ENCODE measurements at regions of chr1 and their contacts with region 1.

Region 1: DNA sequence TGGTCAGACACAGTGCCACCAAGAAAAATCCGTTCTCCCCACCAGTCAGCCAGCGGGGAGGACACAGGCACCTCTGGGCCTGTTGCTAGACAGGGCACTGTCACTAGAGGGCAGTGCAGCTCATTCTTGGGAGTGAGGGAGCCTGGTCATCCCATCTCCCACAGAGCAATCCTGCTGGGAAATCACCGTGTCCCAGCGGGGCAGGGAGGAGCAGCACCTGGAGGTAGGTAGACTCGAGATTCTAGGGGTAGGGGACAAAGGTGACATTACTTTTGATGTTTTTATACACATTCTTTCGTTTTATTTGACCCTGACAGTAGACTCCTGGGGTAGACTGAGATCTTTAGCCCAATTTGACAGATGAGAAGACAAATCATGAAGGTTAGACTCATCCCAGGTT is 6.7 kb upstream of the CAMK1G start:
- DNase-seq: peak; percentile 74
- H3K4me3 Mint-ChIP-seq: no peak overlapping the region
- H3K27ac Mint-ChIP-seq: no peak overlapping the region
- H3K4me1 Mint-ChIP-seq: no peaks in the 10 kb centered on the region
- H3K27me3 Mint-ChIP-seq: peaks cover 24% of the 10 kb centered on the region

Region 2: DNA sequence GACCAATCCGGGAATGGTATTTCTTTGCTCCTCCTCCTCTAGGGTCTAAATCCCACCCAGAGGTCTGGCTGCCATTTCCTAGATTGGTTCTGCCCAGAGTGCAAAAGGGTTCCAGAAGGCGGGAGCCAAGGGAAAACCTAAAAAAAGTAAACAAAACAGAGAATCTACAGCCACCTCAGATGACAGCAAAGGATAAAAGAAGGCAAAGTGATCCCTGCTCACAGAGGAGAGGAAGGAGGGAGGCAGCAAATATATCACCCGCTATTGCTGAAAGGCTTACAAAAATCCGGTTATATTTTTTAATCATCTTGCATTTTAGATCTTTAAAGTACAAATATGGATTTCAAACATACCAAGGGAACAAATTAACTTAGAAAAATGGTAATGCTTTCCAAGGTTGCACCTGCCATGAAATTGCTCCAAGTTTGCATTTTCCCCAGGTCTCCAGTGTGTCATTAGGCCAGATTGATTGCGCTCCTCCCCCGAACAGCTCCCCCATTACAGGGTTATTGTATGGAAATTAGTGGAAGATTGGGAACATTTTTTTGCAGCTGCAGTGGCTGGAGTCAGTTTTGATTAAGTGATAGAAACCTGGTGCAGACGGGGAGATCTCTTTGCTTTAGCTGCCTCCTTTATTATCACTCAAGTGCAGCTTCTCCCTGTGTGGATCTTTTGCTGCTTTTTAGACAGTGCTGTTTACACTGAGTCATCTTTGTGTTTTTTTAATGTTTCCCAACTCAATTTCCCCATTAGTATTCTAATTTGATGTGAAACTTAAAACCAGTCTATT is 273.8 kb before region 1 on chr1:
- CTCF ChIA-PET with region 1: no interaction called
- POLR2A ChIA-PET with region 1: no interaction called
- DNase-seq: no peak
- H3K4me3 Mint-ChIP-seq: no peak overlapping the region
- H3K27ac Mint-ChIP-seq: no peak overlapping the region
- H3K4me1 Mint-ChIP-seq: no peaks in the 10 kb centered on the region
- H3K27me3 Mint-ChIP-seq: peaks cover 2% of the 10 kb centered on the region

Region 3: GRCh38 chr1:209565759-209566678 is 10.8 kb before region 1 on chr1:
- CTCF ChIA-PET with region 1: interaction called, 33 read pairs
- POLR2A ChIA-PET with region 1: no interaction called
- DNase-seq: peak; percentile 79
- H3K4me3 Mint-ChIP-seq: no peak overlapping the region
- H3K27ac Mint-ChIP-seq: no peak overlapping the region
- H3K4me1 Mint-ChIP-seq: peaks cover 9% of the 10 kb centered on the region
- H3K27me3 Mint-ChIP-seq: peaks cover 21% of the 10 kb centered on the region

Region 4: DNA sequence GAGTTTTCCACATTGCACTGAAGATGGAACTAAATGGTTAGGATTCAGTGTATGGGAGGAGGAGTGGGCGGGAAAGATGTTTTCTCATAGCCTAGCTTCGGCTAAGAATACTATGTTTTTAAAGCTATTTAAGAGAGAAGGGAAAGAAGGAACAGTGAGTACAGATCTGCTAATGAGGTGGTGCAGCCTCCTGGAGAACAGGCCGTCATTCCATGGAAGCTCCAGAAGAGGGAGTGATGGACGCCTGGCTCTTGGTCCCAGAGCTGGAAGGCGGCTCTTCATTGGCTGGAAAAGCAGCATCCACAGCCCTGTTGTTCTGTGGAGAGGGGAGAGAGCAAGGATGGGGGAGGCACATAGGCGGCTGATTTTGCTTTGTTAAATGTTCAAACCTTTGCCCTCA is 13.6 kb after region 1 on chr1:
- CTCF ChIA-PET with region 1: interaction called, 16 read pairs
- POLR2A ChIA-PET with region 1: no interaction called
- DNase-seq: no peak
- H3K4me3 Mint-ChIP-seq: no peak overlapping the region
- H3K27ac Mint-ChIP-seq: no peak overlapping the region
- H3K4me1 Mint-ChIP-seq: no peaks in the 10 kb centered on the region
- H3K27me3 Mint-ChIP-seq: peaks cover 36% of the 10 kb centered on the region

Region 5: DNA sequence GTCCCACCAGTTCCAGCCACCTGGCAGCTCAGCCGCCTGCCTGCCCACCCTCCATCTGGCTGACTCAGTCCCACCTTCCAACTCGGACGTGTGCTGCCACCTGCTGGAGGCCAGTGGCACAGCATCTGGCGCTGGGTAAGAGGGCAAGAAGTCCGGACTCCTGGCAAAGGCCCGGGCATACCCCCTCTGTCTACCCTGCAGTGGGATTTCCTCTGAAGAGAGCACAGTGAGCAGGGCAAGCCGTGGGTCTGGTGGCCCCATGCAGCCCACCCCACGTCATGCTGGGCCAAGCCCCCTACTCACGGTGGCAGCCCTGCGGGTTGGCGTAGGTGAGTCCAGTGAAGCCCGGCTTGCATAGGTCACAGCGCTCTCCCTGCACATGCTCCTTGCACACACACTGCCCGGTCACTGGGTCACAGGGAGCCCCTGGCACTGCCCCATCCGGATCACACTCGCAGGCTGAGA is 51.0 kb after region 1 on chr1:
- CTCF ChIA-PET with region 1: interaction called, 10 read pairs
- POLR2A ChIA-PET with region 1: no interaction called
- DNase-seq: peak; percentile 80
- H3K4me3 Mint-ChIP-seq: no peak overlapping the region
- H3K27ac Mint-ChIP-seq: no peak overlapping the region
- H3K4me1 Mint-ChIP-seq: peaks cover 18% of the 10 kb centered on the region
- H3K27me3 Mint-ChIP-seq: no peaks in the 10 kb centered on the region

Region 6: DNA sequence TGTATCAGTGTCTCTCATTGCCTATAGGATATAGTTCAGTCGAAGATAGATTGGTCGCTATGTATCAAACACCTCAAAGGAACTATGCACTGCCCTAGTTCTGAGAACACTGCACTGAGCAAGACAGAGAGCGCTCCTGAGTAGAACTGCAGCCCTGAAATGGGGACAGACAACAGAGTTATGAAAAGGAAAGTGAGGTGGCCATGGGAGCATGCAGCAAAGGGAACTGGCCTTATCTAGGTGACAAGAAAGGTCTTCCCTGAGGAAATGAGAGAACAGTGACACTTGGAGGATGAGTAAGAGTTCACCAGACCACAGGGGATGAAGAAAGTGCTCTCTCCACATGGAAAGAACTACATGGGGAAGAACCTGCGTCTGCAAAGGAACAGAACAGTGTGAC is 90.9 kb after region 1 on chr1:
- CTCF ChIA-PET with region 1: no interaction called
- POLR2A ChIA-PET with region 1: no interaction called
- DNase-seq: no peak
- H3K4me3 Mint-ChIP-seq: no peak overlapping the region
- H3K27ac Mint-ChIP-seq: no peak overlapping the region
- H3K4me1 Mint-ChIP-seq: peaks cover 23% of the 10 kb centered on the region
- H3K27me3 Mint-ChIP-seq: peaks cover 3% of the 10 kb centered on the region

Region 7: GRCh38 chr1:209692745-209693504 is 116.1 kb after region 1 on chr1:
- CTCF ChIA-PET with region 1: interaction called, 23 read pairs
- POLR2A ChIA-PET with region 1: no interaction called
- DNase-seq: peak; percentile 81
- H3K4me3 Mint-ChIP-seq: no peak overlapping the region
- H3K27ac Mint-ChIP-seq: no peak overlapping the region
- H3K4me1 Mint-ChIP-seq: peaks cover 46% of the 10 kb centered on the region
- H3K27me3 Mint-ChIP-seq: no peaks in the 10 kb centered on the region

Region 8: GRCh38 chr1:209769171-209769904 is 192.5 kb after region 1 on chr1:
- CTCF ChIA-PET with region 1: interaction called, 10 read pairs
- POLR2A ChIA-PET with region 1: no interaction called
- DNase-seq: peak; percentile 87
- H3K4me3 Mint-ChIP-seq: no peak overlapping the region
- H3K27ac Mint-ChIP-seq: no peak overlapping the region
- H3K4me1 Mint-ChIP-seq: peaks cover 37% of the 10 kb centered on the region
- H3K27me3 Mint-ChIP-seq: no peaks in the 10 kb centered on the region

Measured in activated CD4-positive, alpha-beta memory T cell treated with anti-CD3 and anti-CD28 coated beads, Interleukin-2, amount 10 ng/mL, durations not matched to agents 7 days and 5 days (primary cell).